BJ (cell line): ENCODE measurements at regions of chr5 and their contacts with region 1.

Region 1: DNA sequence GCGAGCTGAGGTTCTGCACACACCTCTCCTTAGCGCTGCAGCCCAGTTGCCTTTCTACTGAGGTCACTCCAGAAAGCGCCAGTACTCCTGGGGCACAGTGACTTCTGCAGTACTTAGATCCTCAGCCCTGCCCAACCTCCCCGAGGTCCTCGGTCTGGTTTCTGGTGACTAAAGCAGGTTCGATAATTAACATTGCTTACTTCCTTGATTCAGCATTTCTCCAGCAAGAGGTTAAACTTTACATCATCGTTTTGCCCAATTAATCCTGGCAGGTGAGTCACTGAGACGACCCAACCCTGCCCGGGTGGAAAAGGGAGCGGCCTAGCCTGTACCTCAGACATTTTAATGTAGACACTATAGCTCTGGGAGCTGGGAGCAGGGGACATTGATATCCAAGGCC is 77.6 kb downstream of the PLAC8L1 start:
- DNase-seq: no peak
- H3K4me3 ChIP-seq: no peak overlapping the region
- H3K27me3 ChIP-seq: no peaks in the 10 kb centered on the region
- CTCF ChIP-seq: no peak

Region 2: GRCh38 chr5:145991044-145991575 is 36.6 kb before region 1 on chr5:
- CTCF ChIA-PET with region 1: no interaction called
- POLR2A ChIA-PET with region 1: no interaction called
- DNase-seq: peak; percentile 3
- H3K4me3 ChIP-seq: no peak overlapping the region
- H3K27me3 ChIP-seq: no peaks in the 10 kb centered on the region
- CTCF ChIP-seq: no peak

Region 3: GRCh38 chr5:146007270-146007669 is 20.5 kb before region 1 on chr5:
- CTCF ChIA-PET with region 1: no interaction called
- POLR2A ChIA-PET with region 1: no interaction called
- DNase-seq: no peak
- H3K4me3 ChIP-seq: no peak overlapping the region
- H3K27me3 ChIP-seq: 0 out of 2 replicates have a peak, but pooled peaks cover 2% of the 10 kb centered on the region
- CTCF ChIP-seq: 0 out of 2 replicates have a peak, but pooled peaks have one; percentile 4

Region 4: DNA sequence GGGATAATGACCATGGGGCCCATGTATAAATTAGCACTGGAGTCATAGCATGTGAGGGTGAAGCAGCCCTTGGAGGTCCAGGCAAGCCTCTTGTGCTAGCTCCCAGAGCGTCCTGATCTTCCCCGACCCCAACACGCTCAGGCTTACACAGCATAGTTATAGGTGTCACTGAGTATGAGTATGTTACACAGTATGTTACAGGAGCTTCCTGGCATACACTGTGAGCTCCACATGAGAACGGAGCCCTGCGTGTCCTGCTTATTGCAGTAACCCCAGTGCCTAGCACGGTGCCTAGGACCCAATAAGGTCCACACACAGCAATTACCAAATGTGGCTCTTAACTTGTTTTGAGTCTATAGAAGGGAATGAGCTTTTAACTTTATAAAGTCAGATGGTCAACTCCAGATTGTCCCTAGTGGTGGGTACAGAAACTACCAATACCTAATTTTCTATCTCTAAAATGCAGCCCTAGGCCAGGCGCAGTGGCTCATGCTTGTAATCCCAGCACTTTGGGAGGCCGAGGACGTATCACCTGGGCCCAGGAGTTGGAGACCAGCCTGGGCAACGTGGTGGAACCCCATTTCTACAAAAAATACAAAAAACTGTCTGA is 13.5 kb after region 1 on chr5:
- CTCF ChIA-PET with region 1: interaction called, 11 read pairs
- POLR2A ChIA-PET with region 1: no interaction called
- DNase-seq: no peak
- H3K4me3 ChIP-seq: no peak overlapping the region
- H3K27me3 ChIP-seq: no peaks in the 10 kb centered on the region
- CTCF ChIP-seq: peak; percentile 36